ENCODE measurements at regions of chr1 and their contacts with region 1.

Region 1: GRCh38 chr1:201709564-201710295 is 119.2 kb upstream of the IPO9 start:
- DNase-seq: peak; percentile 23
- ATAC-seq: peak; percentile 80
- H3K4me3 ChIP-seq: no peak overlapping the region
- H3K27ac ChIP-seq: no peak overlapping the region
- H3K4me1 ChIP-seq: peaks cover 30 to 45% of the 10 kb centered on the region in 2 experiments
- H3K27me3 ChIP-seq: no peaks in the 10 kb centered on the region
- CTCF ChIP-seq: peak in 2 of 3 experiments; percentile 77 to 78; a peak in 4 of 6 replicates
- POLR2A ChIP-seq: no peak
- RAD21 ChIP-seq: no peak

Region 2: DNA sequence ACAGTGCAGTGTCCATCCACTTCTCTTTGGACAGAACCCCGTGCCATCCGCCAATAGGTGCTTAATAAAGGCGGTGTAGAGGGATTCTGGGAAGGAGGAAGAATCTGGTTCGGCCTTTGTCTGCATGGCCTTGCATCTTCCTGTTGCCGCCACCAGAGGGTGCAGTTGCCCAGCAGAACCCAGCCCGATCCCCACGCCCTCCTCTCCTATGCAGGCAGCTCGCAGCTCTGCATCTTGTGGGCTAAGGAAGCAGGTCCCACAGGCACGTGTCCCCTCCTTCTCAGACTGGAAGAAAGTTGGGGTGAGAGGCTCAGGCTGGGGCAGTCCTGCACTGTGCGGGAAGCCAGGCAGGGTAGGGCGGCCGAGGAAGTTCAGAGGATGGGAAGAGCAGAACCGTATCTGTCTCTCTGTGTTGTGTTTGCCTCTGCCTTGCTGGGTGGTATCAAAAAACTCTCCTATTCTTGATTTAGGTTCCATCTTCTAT is 150.0 kb before region 1 on chr1:
- CTCF ChIA-PET with region 1: interaction called, 38 read pairs
- POLR2A ChIA-PET with region 1: interaction called, 3 read pairs
- RAD21 ChIA-PET with region 1: interaction called, 4 to 7 read pairs
- intact Hi-C with region 1: loop called (anchors 1 kb)
- DNase-seq: peak; percentile 79
- ATAC-seq: peak; percentile 99
- H3K4me3 ChIP-seq: no peak overlapping the region
- H3K27ac ChIP-seq: no peak overlapping the region
- H3K4me1 ChIP-seq: peaks cover 2 to 17% of the 10 kb centered on the region in 2 experiments; a peak in 3 of 4 replicates
- H3K27me3 ChIP-seq: no peaks in the 10 kb centered on the region
- CTCF ChIP-seq: peak; percentile 94 to 98 (median 96)
- POLR2A ChIP-seq: no peak
- RAD21 ChIP-seq: peak; percentile 100

Region 3: DNA sequence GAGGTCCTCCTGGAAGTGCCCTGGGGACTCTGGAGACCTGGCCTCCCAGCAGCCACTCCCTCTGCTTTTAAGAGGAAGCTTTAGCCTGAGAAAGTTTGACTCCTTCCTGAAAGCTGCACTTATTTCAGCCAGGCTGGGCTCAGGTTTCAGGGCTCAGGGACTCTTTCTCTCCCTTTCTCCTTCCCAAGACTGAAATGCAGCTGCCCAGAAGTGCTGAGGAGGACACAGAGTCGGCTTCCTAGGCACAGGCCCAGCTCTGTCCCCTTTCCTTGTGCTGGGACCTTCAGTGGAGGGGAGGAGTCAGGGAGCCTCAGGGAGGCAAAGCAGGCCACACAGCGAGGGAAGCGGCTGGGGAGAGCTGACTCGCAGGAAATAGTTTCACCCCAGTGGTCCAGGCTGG is 33.5 kb before region 1 on chr1:
- CTCF ChIA-PET with region 1: no interaction called
- POLR2A ChIA-PET with region 1: no interaction called
- RAD21 ChIA-PET with region 1: no interaction called
- intact Hi-C with region 1: no loop called
- DNase-seq: no peak
- ATAC-seq: peak; percentile 71
- H3K4me3 ChIP-seq: no peak overlapping the region
- H3K27ac ChIP-seq: no peak overlapping the region; the same call in 1 of the 2 replicates
- H3K4me1 ChIP-seq: peaks cover 8 to 15% of the 10 kb centered on the region in 2 experiments; a peak in 3 of 4 replicates
- H3K27me3 ChIP-seq: no peaks in the 10 kb centered on the region
- CTCF ChIP-seq: no peak
- POLR2A ChIP-seq: no peak
- RAD21 ChIP-seq: no peak

Region 4: DNA sequence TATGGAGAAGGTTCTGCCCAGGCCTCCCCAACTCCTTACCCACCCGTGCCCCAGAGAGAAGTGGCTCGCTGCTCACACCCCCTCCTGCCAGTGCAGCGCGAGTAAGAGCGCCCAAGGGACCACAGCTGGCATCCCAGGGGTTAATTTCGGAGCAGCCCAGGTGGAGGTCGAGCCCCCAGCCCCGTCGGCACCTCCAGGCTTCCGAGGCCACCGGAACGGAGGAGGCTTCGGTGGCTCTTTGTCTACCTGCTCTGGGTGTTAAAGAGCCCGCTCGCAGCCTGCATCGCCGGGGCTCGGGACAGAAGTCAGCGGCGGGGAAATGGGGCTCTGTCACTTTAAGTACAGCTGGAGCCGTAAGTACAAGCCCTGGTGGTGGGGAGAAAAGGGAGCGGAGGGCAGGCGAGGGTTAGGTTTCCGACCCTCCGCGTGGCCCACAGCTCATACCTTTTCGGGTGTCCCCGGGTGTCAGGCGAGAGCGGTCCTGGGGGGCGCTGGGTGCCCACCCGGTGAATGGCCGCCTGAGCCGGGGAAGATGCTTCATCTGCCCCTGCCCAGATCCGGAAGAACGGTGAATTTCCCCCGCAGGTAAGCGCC is 29.9 kb after region 1 on chr1:
- CTCF ChIA-PET with region 1: interaction called, 9 read pairs
- POLR2A ChIA-PET with region 1: interaction called, 9 read pairs
- RAD21 ChIA-PET with region 1: interaction called in 1 of 2 experiments, 4 read pairs
- intact Hi-C with region 1: loop called (anchors 2 kb)
- DNase-seq: peak; percentile 61
- ATAC-seq: peak; percentile 90
- H3K4me3 ChIP-seq: peak overlapping the region; percentile 85 to 89
- H3K27ac ChIP-seq: peak overlapping the region; percentile 55
- H3K4me1 ChIP-seq: peaks cover 19 to 48% of the 10 kb centered on the region in 2 experiments; a peak in 3 of 4 replicates
- H3K27me3 ChIP-seq: no peaks in the 10 kb centered on the region
- CTCF ChIP-seq: no peak
- POLR2A ChIP-seq: no peak
- RAD21 ChIP-seq: no peak

Region 5: DNA sequence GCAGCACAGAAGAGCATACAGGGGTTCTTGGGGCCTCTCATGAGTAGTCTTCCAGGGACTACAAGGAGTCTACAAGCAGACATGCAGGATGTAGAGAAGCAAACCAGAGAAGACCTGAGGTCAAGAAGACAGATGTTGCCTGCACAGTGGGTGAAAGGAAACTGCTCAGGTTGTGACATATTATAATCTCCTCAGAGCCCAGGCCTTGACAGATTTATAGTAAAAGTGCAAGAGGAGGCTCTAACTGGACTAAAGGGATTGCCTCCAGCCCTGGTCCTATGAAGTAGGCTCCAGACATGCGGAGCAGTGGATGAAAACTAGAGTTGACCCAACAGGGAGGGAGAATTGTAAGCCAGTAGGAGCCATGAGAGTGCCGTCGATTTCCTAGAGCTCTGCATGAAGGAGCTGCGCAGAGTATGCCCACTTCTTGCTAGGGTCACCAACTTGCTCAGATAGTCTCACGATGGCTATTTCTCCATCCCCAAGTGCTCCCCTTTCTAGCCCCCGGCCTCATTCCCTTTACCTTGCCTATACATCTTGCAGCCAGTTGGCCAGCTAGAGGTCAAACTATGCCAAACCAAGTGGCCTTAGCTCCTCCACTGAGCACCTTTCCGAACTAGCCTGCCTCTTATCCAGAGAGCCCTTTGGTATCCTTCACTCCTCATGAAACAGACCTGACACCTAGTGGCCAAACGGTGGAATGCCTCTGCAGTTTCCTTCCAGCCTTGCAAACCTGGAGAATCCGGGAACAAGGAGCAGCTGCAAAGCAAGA is 83.0 kb after region 1 on chr1:
- CTCF ChIA-PET with region 1: interaction called, 297 read pairs
- POLR2A ChIA-PET with region 1: interaction called, 11 read pairs
- RAD21 ChIA-PET with region 1: interaction called, 28 to 40 read pairs
- intact Hi-C with region 1: loop called (anchors 1 kb)
- DNase-seq: peak; percentile 70
- ATAC-seq: peak; percentile 97
- H3K4me3 ChIP-seq: no peak overlapping the region
- H3K27ac ChIP-seq: no peak overlapping the region
- H3K4me1 ChIP-seq: no peaks in the 10 kb centered on the region
- H3K27me3 ChIP-seq: no peaks in the 10 kb centered on the region
- CTCF ChIP-seq: peak; percentile 97 to 99 (median 98)
- POLR2A ChIP-seq: no peak
- RAD21 ChIP-seq: peak; percentile 99

Region 6: DNA sequence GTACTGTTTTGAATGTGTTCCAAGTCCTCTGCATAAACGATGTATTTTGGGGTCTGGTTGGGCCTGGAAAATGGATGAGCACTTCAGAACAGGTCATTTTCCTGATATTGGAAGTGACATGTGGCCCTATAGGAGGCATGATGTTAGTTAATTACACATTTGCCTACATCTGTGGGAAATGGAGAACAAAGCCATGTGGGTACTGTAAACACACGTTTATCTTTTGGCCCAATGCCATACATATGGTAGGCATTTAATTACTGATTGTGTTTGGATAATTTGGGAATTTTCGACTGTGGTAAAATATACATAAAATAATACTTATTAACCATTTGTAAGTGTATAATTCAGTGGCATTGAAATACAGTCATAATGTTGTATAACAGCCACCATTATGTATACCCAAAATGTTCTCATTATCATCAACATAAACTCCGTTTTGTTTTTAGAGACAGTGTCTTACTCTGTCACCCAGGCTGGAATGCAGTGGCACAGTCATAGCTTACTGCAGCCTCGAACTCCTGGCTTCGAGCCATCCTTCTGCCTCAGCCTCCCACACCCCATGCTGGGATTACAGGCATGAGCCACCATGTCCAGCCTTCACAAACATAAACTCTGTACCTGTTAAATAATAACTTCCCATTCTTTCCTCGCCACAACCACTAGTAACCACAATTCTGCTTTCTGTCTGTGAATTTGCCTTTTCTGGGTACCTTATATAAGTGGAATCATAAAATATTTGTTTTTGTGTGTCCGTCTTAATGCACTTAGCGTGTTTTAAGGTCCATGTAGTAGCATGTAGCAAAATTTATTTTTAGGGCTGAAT is 260.8 kb after region 1 on chr1:
- CTCF ChIA-PET with region 1: interaction called, 9 read pairs
- POLR2A ChIA-PET with region 1: no interaction called
- RAD21 ChIA-PET with region 1: no interaction called
- intact Hi-C with region 1: loop called (anchors 10 kb)
- DNase-seq: no peak
- ATAC-seq: peak; percentile 44
- H3K4me3 ChIP-seq: no peak overlapping the region
- H3K27ac ChIP-seq: no peak overlapping the region
- H3K4me1 ChIP-seq: no peaks in the 10 kb centered on the region
- H3K27me3 ChIP-seq: no peaks in the 10 kb centered on the region
- CTCF ChIP-seq: no peak
- POLR2A ChIP-seq: no peak
- RAD21 ChIP-seq: no peak

Region 7: GRCh38 chr1:202105539-202106276 is 396.0 kb after region 1 on chr1:
- CTCF ChIA-PET with region 1: no interaction called
- POLR2A ChIA-PET with region 1: no interaction called
- RAD21 ChIA-PET with region 1: no interaction called
- intact Hi-C with region 1: loop called (anchors 5 kb)
- DNase-seq: peak; percentile 88
- ATAC-seq: peak; percentile 83
- H3K4me3 ChIP-seq: peak overlapping the region; percentile 22 to 40
- H3K27ac ChIP-seq: peak overlapping the region; percentile 86
- H3K4me1 ChIP-seq: peaks cover 58 to 71% of the 10 kb centered on the region in 2 experiments
- H3K27me3 ChIP-seq: no peaks in the 10 kb centered on the region
- CTCF ChIP-seq: no peak
- POLR2A ChIP-seq: no peak
- RAD21 ChIP-seq: no peak